Activated naive CD4-positive, alpha-beta T cell treated with anti-CD3 and anti-CD28 coated beads for 36 hours (primary cell): ENCODE measurements at regions of chr4 and their contacts with region 1.

Region 1: DNA sequence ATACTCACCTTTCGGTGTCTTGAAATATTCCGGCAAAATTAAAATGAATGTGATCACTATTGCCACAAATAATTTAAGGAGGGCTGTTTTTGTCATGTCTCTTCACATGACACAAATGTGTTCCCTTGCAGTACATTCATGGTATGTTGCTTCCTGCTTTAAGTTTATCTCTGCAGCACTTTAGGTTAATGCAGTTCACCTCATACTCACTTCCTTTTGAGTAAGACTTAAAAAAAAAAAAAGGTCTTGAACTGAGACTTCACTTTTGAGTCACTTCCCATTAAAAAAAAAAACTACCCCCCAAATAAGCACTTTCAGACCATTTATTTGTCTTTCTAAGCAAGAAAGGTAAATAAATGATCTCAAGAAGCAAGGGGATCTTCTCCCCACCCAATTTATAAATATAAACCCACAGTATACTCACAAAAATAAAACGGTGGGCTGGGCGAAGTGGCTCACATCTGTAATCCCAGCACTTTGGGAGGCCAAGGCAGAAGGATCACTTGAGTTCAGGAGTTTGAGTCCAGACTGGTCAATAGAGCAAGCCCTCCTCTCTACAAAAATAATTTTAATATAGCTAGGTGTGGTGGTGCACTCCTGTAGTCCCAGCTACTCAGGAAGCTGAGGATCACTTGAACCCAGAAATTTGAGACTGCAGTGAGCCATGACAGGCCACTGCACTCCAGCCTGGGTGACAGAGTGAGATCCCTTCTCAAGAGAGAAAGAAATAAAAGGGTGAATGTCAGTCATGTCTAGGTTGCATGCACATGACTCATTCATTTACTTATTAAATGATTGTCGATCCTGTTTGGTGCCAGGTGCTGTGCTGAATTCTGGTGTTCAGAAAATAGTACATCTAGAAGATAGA is at the start of gene TMEM156:
- DNase-seq: peak; percentile 65
- H3K4me3 Mint-ChIP-seq: peak within 1 kb of the TSS; percentile 77
- H3K27ac Mint-ChIP-seq: peak within 1 kb of the TSS; percentile 89
- H3K4me1 Mint-ChIP-seq: peaks cover 57% of the 10 kb centered on the region
- H3K27me3 Mint-ChIP-seq: no peaks in the 10 kb centered on the region
- total RNA-seq, gene TMEM156: 10.2 to 11.3 TPM

Region 2: DNA sequence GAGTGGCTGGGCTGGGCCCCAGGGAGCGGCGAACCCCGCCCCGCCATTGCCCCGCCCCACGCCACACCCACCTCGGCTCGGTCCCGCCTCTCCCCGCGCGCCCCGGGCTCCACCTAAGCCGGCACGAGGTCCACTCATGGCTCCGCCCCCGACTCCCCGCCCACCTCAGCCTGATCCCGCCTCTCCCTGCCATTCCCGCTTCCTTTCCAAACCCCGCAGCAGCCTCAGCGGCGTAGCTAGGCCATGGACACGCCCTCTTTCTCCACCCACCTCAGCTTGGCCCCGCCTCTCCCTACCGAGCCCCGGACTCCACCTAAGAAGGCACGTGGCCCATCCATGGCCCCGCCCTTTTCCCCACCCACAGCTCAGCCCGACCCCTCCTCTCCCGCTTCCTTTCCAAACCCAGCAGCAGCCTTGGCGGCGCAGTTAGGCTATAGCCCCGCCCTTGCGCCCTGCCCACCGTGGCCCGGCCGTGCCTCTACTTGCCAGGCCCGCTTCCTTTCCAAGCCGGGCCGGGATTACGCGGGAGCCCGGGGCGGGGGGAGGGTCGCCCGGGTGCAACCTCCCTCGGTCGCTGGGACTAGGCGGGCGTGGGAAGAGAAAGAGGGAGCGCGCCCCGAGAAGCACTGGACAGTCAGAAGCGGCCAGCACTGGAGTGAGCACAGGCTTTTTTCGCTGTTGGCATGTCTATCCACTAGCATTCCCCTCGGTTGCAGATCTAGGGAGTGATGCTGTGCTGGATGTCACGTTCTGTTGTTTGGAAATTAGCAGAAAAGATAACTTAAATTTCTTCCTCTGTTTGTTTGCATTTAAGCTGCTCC is 1345.9 kb before region 1 on chr4 and contains the start of gene RELL1:
- CTCF ChIA-PET with region 1: no interaction called
- intact Hi-C with region 1: loop called (anchors 5 kb)
- DNase-seq: peak; percentile 100
- H3K4me3 Mint-ChIP-seq: peak within 1 kb of the TSS; percentile 84
- H3K27ac Mint-ChIP-seq: peak within 1 kb of the TSS; percentile 82
- H3K4me1 Mint-ChIP-seq: peaks cover 34% of the 10 kb centered on the region
- H3K27me3 Mint-ChIP-seq: no peaks in the 10 kb centered on the region
- total RNA-seq, gene RELL1: 8.7 to 10.3 TPM

Region 3: DNA sequence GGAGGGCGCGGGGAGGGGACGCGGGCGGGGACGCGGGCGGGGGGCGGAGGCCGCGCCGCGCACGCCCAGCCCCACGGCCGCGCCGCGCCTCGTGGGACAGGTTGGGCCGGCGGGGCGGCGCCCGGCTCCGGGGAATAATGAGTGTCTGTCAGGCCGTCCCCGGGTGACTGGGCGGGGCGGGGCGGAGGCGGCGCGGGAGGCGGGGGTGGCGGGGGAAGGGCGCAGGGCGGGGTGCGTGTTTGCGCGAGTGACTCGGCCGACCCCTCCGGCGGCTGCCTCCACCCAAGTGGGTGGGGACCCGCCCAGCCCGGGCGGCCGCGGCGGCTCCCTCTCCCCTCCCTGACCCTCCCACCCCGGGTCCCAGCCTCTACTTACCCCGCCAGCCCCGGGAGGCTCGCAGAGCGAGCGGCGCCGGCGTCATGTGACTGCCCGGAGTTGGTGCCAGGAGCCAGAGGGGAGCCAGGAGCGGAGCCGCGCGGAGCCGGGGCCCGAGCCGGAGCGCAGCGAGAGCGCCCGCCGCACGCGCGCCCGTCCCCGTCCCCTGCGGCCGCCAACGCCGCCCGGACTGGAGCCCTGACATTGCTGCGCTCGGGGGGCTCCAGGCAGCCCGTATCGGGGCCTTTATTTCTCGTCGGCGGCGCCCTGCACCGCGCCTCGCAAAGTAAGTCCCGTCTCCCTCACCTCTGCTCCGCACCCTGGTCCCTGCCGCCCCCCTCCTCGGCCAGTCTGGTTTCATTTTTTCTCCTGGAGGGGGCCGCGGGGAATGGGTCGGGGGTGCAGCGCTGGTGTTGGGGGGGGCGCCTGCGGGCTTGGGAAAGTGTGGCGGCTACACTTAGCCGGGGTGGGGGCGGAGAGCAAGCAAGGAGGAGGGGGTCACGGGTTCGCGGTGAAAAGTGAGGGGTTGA is 368.4 kb before region 1 on chr4 and contains the start of gene KLF3:
- CTCF ChIA-PET with region 1: no interaction called
- intact Hi-C with region 1: loop called (anchors 5 kb)
- DNase-seq: peak; percentile 86
- H3K4me3 Mint-ChIP-seq: peak within 1 kb of the TSS; percentile 79
- H3K27ac Mint-ChIP-seq: peak within 1 kb of the TSS; percentile 87
- H3K4me1 Mint-ChIP-seq: peaks cover 66% of the 10 kb centered on the region
- H3K27me3 Mint-ChIP-seq: no peaks in the 10 kb centered on the region
- total RNA-seq, gene KLF3: 15.2 to 15.8 TPM

Region 4: DNA sequence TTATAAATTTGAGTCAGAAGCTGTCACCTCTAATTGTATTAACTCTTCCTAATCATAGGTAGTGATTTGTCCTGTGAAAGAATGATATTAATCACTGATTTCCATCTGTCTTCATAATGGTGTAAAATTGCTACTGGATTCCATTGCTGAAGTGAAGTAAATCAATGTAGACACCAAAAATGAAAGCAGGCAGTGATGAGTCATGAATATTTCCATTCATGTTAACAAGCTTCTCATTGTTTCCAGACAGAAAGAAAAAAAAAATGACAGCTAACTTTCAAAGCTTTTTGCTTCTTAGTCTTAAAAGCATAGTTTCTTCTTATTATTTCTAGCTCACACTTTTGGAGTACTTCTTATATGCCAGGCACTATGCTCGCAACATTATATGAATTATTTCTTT is 143.3 kb before region 1 on chr4:
- CTCF ChIA-PET with region 1: no interaction called
- intact Hi-C with region 1: loop called (anchors 1 kb)
- DNase-seq: no peak
- H3K4me3 Mint-ChIP-seq: peak overlapping the region; percentile 46
- H3K27ac Mint-ChIP-seq: peak overlapping the region; percentile 88
- H3K4me1 Mint-ChIP-seq: peaks cover 23% of the 10 kb centered on the region
- H3K27me3 Mint-ChIP-seq: no peaks in the 10 kb centered on the region

Region 5: GRCh38 chr4:38958453-38959190 is 73.8 kb before region 1 on chr4:
- CTCF ChIA-PET with region 1: no interaction called
- intact Hi-C with region 1: loop called (anchors 2 kb)
- DNase-seq: no peak
- H3K4me3 Mint-ChIP-seq: no peak overlapping the region
- H3K27ac Mint-ChIP-seq: peak overlapping the region; percentile 73
- H3K4me1 Mint-ChIP-seq: peaks cover 26% of the 10 kb centered on the region
- H3K27me3 Mint-ChIP-seq: no peaks in the 10 kb centered on the region

Region 6: GRCh38 chr4:39044364-39044955 is 12.0 kb after region 1 on chr4:
- CTCF ChIA-PET with region 1: interaction called, 11 read pairs
- intact Hi-C with region 1: loop called (anchors 1 kb)
- DNase-seq: peak; percentile 99
- H3K4me3 Mint-ChIP-seq: peak overlapping the region; percentile 83
- H3K27ac Mint-ChIP-seq: peak overlapping the region; percentile 92
- H3K4me1 Mint-ChIP-seq: peaks cover 51% of the 10 kb centered on the region
- H3K27me3 Mint-ChIP-seq: no peaks in the 10 kb centered on the region

Region 7: GRCh38 chr4:39458505-39459300 is 426.3 kb after region 1 on chr4 and contains the starts of genes LIAS and RPL9:
- CTCF ChIA-PET with region 1: no interaction called
- intact Hi-C with region 1: loop called (anchors 2 kb)
- DNase-seq: peak; percentile 95
- H3K4me3 Mint-ChIP-seq: peak within 1 kb of the TSS; percentile 91
- H3K27ac Mint-ChIP-seq: peak within 1 kb of the TSS; percentile 98
- H3K4me1 Mint-ChIP-seq: peaks cover 48% of the 10 kb centered on the region
- H3K27me3 Mint-ChIP-seq: no peaks in the 10 kb centered on the region
- total RNA-seq, gene LIAS: 30.9 to 31.7 TPM
- total RNA-seq, gene RPL9: 2,383 to 2,428 TPM